Activated CD4-positive, alpha-beta T cell treated with anti-CD3 and anti-CD28 coated beads for 36 hours (primary cell): ENCODE measurements at regions of chr5 and their contacts with region 1.

Region 1: DNA sequence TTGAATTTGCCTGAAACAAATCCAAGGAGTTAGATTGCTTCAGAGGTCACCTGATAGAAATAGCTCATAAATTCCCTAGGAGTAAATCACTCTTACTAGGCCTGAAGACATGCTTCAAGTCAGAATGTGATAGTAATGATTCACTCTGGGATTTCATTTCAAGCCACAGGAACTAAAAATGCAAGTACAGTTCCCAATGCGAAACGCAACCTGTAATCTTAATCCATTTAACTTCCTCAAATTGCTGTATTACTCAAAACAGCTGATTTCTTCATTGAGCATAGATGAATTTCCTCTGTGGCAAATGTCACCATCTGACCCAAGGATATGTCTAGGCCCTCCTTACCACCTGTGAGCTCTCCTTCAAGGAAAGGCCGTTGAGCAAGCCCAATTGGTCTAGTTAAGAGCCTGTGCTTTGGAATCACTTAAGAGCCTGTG is 32.1 kb upstream of the IL6ST start:
- DNase-seq: no peak
- ATAC-seq: peak; percentile 92
- H3K4me3 Mint-ChIP-seq: no peak overlapping the region
- H3K27ac Mint-ChIP-seq: no peak overlapping the region
- H3K4me1 Mint-ChIP-seq: peaks cover 16% of the 10 kb centered on the region
- H3K27me3 Mint-ChIP-seq: no peaks in the 10 kb centered on the region

Region 2: DNA sequence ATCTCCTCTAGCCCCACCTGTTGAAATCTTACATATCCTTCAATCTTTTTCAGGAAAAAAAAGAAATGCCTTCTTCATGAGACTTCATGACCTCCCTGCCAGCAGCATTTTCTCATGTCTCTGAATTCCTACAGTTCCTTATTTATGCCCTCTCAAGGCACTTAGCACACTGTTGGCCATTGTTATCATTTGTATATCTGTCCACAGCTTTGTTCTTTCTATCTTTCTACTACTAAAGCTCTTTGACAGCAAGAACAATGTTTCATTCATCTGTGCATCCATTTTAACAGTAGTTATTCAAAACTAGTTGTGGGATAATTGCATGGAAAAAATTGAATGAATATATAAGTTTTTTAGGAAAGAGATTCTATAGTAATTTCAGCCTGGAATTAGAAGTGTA is 945.3 kb before region 1 on chr5:
- CTCF ChIA-PET with region 1: no interaction called
- POLR2A ChIA-PET with region 1: no interaction called
- intact Hi-C with region 1: no loop called
- DNase-seq: no peak
- ATAC-seq: no peak
- H3K4me3 Mint-ChIP-seq: no peak overlapping the region
- H3K27ac Mint-ChIP-seq: no peak overlapping the region
- H3K4me1 Mint-ChIP-seq: no peaks in the 10 kb centered on the region
- H3K27me3 Mint-ChIP-seq: peaks cover 2% of the 10 kb centered on the region

Region 3: DNA sequence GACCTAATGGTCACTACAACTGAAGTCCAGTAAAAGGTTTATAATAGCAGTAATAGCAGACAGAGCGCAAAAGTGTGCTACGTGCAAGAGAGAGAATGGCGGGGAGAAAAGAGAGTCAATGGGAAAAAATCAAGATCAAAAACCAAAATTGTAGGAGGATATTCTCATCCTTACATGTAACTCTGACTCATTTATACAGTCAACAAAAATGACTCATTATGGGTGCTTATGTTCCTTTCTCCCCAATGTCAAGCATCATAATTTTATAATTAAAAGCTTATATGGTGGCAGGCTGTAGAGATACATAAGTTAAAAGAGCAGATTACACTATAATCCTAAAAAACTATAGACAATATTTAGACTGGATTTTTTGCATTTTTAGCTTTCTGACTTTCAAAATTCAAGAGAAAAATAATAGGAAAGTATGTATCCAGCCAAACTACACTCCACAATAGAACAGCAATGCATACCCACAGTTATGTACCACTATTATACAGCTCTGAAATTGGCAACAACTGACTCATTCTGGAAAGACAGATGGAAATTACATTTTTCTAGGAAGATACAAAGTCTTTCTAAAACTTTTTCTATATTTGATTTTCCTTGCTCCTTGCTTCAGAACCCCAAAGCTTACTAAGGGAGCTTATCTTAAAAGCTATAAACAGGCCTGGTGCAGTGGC is 570.5 kb before region 1 on chr5:
- CTCF ChIA-PET with region 1: no interaction called
- POLR2A ChIA-PET with region 1: no interaction called
- intact Hi-C with region 1: no loop called
- DNase-seq: no peak
- ATAC-seq: peak; percentile 74
- H3K4me3 Mint-ChIP-seq: no peak overlapping the region
- H3K27ac Mint-ChIP-seq: no peak overlapping the region
- H3K4me1 Mint-ChIP-seq: peaks cover 8% of the 10 kb centered on the region
- H3K27me3 Mint-ChIP-seq: no peaks in the 10 kb centered on the region

Region 4: DNA sequence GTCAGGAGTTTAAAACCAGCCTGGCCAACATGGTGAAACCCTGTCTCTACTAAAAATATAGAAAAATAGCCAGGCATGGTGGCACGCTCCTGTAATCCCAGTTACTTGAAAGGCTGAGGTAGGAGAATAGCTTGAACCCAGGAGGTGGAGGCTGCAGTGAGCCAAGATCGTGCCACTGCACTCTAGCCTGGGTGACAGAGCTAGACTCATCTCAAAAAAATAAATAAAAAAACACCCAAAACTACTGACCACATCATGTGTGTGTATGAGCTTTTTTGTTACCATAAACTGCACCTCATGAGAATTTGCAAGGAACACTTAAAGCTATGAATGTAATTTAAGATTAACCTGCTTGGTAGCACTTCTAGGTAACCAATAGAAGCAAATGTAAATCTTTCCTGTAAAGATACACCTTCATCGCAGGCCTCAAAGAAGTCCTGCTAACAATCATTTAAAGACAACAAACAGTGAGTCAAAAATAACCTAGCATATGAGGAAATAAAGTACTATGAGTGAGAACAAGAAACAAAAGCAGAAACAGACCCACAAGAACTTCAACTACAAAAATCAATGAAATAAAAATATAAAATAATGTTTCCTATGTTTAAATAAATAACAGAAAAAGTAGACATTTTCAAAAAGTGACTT is 327.7 kb before region 1 on chr5:
- CTCF ChIA-PET with region 1: no interaction called
- POLR2A ChIA-PET with region 1: no interaction called
- intact Hi-C with region 1: no loop called
- DNase-seq: no peak
- ATAC-seq: no peak
- H3K4me3 Mint-ChIP-seq: no peak overlapping the region
- H3K27ac Mint-ChIP-seq: no peak overlapping the region
- H3K4me1 Mint-ChIP-seq: peaks cover 10% of the 10 kb centered on the region
- H3K27me3 Mint-ChIP-seq: no peaks in the 10 kb centered on the region

Region 5: DNA sequence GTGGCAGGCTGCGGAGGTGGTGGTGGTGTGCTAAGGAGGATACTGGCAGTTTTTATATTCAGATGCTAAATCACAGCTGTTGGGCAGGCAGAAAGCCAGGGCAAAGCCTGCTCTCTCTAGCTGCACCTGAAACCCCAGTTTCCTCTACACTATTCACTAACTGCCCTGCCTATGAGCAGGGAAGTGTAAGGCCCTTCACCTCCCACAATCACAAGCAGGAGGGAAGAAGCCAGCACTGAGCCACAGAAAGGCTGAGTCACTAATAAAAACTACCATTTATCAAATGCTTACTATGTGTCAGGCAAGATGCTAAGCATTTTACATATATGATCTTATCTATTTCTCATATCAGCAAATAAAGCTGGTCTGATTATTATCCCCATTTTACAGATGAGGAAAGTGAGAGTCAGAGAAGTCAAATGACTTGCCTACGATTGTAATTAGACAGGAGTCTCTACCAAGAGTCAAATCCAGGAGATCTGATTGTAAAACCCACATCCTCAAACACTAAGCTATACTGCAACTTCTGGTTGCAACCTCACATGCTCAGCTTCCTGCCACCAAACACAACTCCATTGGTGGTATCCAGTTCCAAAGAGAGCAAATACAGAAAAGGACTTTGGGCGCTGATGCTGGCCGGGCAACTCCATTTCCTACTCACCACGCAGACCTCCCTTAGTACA is 14.5 kb before region 1 on chr5:
- CTCF ChIA-PET with region 1: interaction called, 8 read pairs
- POLR2A ChIA-PET with region 1: interaction called, 19 read pairs
- intact Hi-C with region 1: loop called (anchors 1 kb)
- DNase-seq: peak; percentile 57
- ATAC-seq: peak; percentile 74
- H3K4me3 Mint-ChIP-seq: peak overlapping the region; percentile 3
- H3K27ac Mint-ChIP-seq: peak overlapping the region; percentile 61
- H3K4me1 Mint-ChIP-seq: peaks cover 48% of the 10 kb centered on the region
- H3K27me3 Mint-ChIP-seq: no peaks in the 10 kb centered on the region

Region 6: GRCh38 chr5:56050551-56051255 is 23.8 kb after region 1 on chr5:
- CTCF ChIA-PET with region 1: interaction called, 4 read pairs
- POLR2A ChIA-PET with region 1: interaction called, 11 read pairs
- intact Hi-C with region 1: loop called (anchors 2 kb)
- DNase-seq: no peak
- ATAC-seq: peak; percentile 52
- H3K4me3 Mint-ChIP-seq: peak overlapping the region; percentile 5
- H3K27ac Mint-ChIP-seq: peak overlapping the region; percentile 55
- H3K4me1 Mint-ChIP-seq: peaks cover 62% of the 10 kb centered on the region
- H3K27me3 Mint-ChIP-seq: no peaks in the 10 kb centered on the region